Left ventricle myocardium superior (tissue), 1 donor: ENCODE measurements at regions of chr17 and their contacts with region 1.

Region 1: GRCh38 chr17:68435876-68436842 is 21.1 kb downstream of the WIPI1 start:
- DNase-seq: peak; percentile 70
- ATAC-seq: peak; percentile 60

Region 2: DNA sequence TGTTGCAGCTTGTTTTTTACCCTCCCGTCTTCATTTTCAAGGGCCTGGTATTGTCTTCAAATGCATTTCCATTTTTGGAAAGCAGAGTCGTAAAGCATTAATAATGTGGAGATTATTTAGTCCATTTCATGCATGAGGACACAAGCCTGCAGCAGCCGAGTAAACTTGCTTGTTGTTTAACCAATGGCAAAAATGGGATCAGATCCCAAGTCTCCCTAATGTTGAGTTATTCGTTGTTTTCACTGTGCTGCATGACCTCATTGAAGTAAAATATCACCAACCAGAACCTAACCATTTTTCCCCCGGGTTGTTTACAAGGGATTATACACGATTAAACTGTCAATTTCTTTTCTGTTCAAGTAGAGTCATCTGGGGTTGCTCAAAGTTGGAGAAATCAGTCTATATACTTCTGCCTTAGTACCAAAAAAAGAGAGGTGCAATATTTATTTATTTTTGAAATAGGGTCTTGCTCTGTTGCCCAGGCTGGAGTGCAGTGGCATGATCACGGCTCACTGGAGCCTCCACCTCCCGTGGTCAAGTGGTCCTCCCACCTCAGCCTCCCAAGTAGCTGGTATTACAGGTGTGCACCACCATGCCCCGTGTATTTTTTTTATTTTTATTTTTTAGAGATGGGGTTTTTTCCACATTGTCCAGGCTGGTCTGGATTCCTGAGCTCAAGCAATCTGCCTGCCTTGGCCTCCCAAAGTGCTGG is 176.0 kb before region 1 on chr17:
- intact Hi-C with region 1: loop called (anchors 10 kb)
- DNase-seq: no peak
- ATAC-seq: no peak